ENCODE measurements at regions of chr11 and their contacts with region 1.

Region 1: DNA sequence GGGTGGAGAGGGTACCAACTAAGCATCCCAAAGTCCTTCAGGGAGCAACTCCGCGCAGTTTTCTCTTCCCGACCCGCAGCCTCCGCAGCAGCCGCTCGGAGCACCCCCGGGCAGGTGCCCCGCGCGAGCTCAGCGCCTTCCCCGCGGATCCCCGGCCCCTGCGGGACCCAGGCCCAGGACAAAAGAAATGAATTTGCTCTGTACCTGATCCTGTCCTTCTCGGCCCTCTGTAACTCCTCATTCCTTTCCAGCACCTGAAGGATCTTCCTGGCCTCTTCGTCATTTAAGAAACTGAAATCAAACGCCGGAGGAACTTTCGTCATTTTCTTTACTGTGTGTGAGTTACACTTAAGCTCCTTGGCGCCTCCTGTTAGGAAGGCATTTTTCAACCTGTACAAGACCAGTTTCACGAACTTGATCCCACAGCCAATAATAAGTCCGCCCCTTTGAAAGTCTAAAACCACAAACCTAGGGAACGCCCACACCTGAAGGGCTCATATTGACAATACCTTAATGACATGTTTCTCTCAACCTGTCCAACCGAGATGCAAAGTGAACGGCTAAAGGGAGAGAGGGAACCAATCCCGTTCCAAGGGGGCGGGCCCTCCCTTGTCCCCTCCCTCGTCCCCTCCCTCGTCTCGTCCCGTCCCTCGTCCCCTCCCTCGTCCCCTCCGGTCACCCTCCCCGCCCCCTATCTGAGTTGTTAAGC is at the start of gene EXPH5:
- DNase-seq: peak; percentile 98
- H3K4me3 Mint-ChIP-seq: peak within 1 kb of the TSS; percentile 99
- H3K27ac Mint-ChIP-seq: peak within 1 kb of the TSS; percentile 98
- H3K4me1 Mint-ChIP-seq: peaks cover 20% of the 10 kb centered on the region
- H3K27me3 Mint-ChIP-seq: no peaks in the 10 kb centered on the region
- CTCF ChIP-seq: no peak
- total RNA-seq, gene EXPH5: 9.2 and 17.9 TPM in 2 replicates

Region 2: DNA sequence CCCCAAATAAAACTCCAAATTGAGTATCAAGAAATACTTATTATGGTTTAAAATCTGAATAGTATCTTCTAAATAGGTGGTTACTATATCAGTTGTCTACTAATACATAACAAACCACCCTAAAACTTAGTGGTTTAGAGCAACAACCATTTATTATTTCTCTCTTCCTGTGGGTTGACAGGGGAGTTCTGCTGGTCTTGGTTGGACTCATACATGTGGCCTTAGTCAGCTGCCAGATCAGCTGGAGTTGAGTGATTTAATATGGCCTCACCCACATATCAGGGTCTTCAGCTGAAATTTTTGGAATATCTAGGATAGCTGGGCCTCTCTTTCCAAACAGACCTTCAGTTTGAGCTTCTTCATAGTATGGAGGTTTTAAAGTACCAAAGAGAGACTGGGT is 160.6 kb before region 1 on chr11:
- CTCF ChIA-PET with region 1: no interaction called
- POLR2A ChIA-PET with region 1: no interaction called
- intact Hi-C with region 1: no loop called
- DNase-seq: no peak
- H3K4me3 Mint-ChIP-seq: no peak overlapping the region
- H3K27ac Mint-ChIP-seq: no peak overlapping the region
- H3K4me1 Mint-ChIP-seq: no peaks in the 10 kb centered on the region
- H3K27me3 Mint-ChIP-seq: no peaks in the 10 kb centered on the region
- CTCF ChIP-seq: no peak

Region 3: DNA sequence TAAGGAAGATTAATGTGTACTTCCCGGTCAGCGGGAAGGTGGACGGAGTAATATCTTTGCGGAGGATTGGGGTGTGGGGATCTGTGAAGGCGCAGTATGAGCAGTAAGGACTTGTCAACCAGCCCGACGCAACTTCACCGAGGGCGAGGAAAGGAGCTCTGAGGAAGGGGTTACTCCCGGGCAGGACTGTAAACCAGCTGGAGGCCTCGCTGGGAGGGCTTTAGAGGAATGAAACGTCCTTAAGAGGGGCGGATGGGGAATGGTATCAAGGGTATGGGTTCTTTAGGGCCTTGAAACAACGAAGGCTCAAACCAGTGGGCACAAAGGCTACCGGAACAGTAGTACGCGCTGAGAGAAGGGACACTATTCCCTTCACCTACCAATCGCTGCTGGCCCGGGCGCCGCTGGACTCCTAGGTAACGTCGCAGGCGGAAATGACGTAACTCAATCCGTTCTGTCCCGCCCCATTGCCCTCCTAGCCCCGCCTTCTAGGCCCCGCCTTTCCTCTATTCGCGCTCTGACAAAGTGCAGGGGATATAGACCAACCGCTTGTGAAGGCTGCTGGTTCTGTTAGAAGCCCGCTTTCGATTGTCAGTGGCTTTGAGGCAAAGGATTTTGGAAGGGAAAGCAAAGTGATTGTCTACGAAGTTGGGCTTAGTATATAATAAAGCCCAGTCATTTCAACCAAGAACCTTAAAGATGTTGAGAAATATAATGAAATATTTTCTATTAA is 126.1 kb before region 1 on chr11 and contains the start of gene C11orf65:
- CTCF ChIA-PET with region 1: no interaction called
- POLR2A ChIA-PET with region 1: interaction called, 11 read pairs
- intact Hi-C with region 1: no loop called
- DNase-seq: peak; percentile 98
- H3K4me3 Mint-ChIP-seq: peak within 1 kb of the TSS; percentile 93
- H3K27ac Mint-ChIP-seq: peak within 1 kb of the TSS; percentile 100
- H3K4me1 Mint-ChIP-seq: peaks cover 11% of the 10 kb centered on the region
- H3K27me3 Mint-ChIP-seq: no peaks in the 10 kb centered on the region
- CTCF ChIP-seq: no peak
- total RNA-seq, gene C11orf65: 1.4 and 1.5 TPM in 2 replicates

Region 4: GRCh38 chr11:108571001-108571400 is 22.4 kb before region 1 on chr11:
- CTCF ChIA-PET with region 1: no interaction called
- POLR2A ChIA-PET with region 1: interaction called, 16 read pairs
- intact Hi-C with region 1: no loop called
- DNase-seq: peak; percentile 67
- H3K4me3 Mint-ChIP-seq: no peak overlapping the region
- H3K27ac Mint-ChIP-seq: no peak overlapping the region
- H3K4me1 Mint-ChIP-seq: peaks cover 12% of the 10 kb centered on the region
- H3K27me3 Mint-ChIP-seq: no peaks in the 10 kb centered on the region
- CTCF ChIP-seq: no peak

Region 5: GRCh38 chr11:108606495-108607160 is 13.3 kb after region 1 on chr11:
- CTCF ChIA-PET with region 1: interaction called, 4 read pairs
- POLR2A ChIA-PET with region 1: interaction called, 17 read pairs
- intact Hi-C with region 1: loop called (anchors 1 kb)
- DNase-seq: peak; percentile 45
- H3K4me3 Mint-ChIP-seq: no peak overlapping the region
- H3K27ac Mint-ChIP-seq: peak overlapping the region; percentile 33
- H3K4me1 Mint-ChIP-seq: peaks cover 26% of the 10 kb centered on the region
- H3K27me3 Mint-ChIP-seq: no peaks in the 10 kb centered on the region
- CTCF ChIP-seq: no peak

Region 6: GRCh38 chr11:108616567-108616966 is 23.2 kb after region 1 on chr11:
- CTCF ChIA-PET with region 1: no interaction called
- POLR2A ChIA-PET with region 1: interaction called, 39 read pairs
- intact Hi-C with region 1: no loop called
- DNase-seq: peak; percentile 96
- H3K4me3 Mint-ChIP-seq: no peak overlapping the region
- H3K27ac Mint-ChIP-seq: peak overlapping the region; percentile 91
- H3K4me1 Mint-ChIP-seq: peaks cover 14% of the 10 kb centered on the region
- H3K27me3 Mint-ChIP-seq: no peaks in the 10 kb centered on the region
- CTCF ChIP-seq: no peak

Measured in MCF 10A (cell line).